ENCODE measurements at regions of chr19 and their contacts with region 1.

Region 1: GRCh38 chr19:56547535-56547934 is 8.8 kb downstream of the ZFP28 start:
- DNase-seq: no peak
- ATAC-seq: no peak
- H3K4me3 ChIP-seq: no peak overlapping the region
- H3K4me3 Mint-ChIP-seq: no peak overlapping the region
- H3K27ac ChIP-seq: no peak overlapping the region
- H3K27ac Mint-ChIP-seq: no peak overlapping the region
- H3K4me1 ChIP-seq: no peaks in the 10 kb centered on the region
- H3K4me1 Mint-ChIP-seq: no peaks in the 10 kb centered on the region
- H3K27me3 ChIP-seq: no peaks in the 10 kb centered on the region
- H3K27me3 Mint-ChIP-seq: no peaks in the 10 kb centered on the region
- CTCF ChIP-seq: no peak

Region 2: DNA sequence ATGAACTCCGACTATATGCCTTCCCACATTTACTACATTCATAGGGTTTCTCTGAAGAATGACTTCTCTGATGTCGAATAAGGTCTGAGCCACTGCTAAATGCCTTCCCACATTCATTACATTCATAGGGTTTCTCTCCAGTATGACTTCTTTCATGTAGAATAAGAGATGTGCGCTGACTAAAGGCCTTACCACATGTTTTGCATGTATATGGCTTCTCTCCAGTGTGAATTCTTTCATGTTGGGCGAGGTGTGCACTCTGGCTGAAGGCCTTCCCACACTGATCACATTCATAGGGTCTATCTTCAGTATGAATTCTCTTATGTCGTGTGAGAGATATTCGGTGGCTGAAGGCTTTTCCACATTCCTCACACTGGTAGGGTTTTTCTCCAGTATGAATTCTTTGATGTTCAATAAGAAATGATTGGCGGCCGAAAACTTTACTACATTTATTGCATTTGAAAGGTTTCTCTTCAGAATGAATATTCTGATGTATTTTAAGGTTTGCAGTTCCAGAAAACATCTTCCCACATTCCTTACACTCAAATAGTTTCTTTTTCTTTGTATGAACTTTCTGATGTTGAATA is 106.2 kb before region 1 on chr19:
- CTCF ChIA-PET with region 1: no interaction called
- POLR2A ChIA-PET with region 1: no interaction called
- intact Hi-C with region 1: no loop called
- DNase-seq: no peak
- ATAC-seq: no peak
- H3K4me3 ChIP-seq: peak overlapping the region in 1 of 5 experiments; percentile 15
- H3K4me3 Mint-ChIP-seq: no peak overlapping the region
- H3K27ac ChIP-seq: no peak overlapping the region
- H3K27ac Mint-ChIP-seq: no peak overlapping the region
- H3K4me1 ChIP-seq: no peaks in the 10 kb centered on the region
- H3K4me1 Mint-ChIP-seq: no peaks in the 10 kb centered on the region
- H3K27me3 ChIP-seq: no peaks in the 10 kb centered on the region
- H3K27me3 Mint-ChIP-seq: no peaks in the 10 kb centered on the region
- CTCF ChIP-seq: no peak

Region 3: DNA sequence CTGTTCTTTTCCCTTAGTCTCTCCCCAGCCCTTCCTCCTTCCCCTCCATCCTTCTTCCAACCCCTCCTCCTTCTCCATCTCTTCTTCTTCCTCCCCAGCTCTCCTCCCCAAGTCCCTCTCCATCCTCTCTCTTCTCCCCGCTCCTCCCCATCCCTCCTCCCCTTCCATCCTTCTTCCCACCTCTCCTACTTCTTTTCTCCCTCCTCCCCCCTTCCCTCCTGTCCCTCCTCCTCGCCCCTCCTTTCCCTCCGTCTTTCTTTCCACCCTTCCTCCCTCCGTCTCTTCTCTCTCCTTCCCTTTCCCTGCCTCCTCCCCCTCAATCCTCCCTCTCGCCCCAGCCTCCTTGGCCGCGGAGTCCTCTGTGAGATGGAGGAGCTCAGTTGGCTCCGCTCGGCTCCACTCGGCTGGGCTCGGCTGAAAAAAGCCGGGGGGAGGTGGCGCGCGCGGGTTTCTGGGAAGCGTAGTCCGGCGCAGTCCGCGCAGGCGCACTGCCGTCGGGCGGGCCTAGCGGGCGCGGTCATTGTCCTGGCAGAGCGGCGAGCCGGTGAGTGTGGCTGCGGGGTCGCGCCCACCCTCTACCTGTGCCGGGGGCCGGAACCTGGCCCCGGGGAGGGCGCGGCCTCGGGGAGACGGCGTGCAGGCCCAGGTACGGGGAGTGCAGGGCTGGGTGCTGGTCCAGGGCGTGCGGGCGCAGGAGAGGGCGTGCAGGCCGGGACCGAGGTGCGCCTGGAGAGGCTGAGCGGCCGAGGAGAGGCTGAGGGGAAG is 47.4 kb after region 1 on chr19 and contains the start of gene ZNF71:
- CTCF ChIA-PET with region 1: no interaction called
- POLR2A ChIA-PET with region 1: no interaction called
- intact Hi-C with region 1: loop called (anchors 10 kb)
- DNase-seq: peak; percentile 89
- ATAC-seq: peak; percentile 94
- H3K4me3 ChIP-seq: peak within 1 kb of the TSS; percentile 22 to 88 (median 68)
- H3K4me3 Mint-ChIP-seq: peak within 1 kb of the TSS; percentile 93
- H3K27ac ChIP-seq: peak within 1 kb of the TSS; percentile 49 to 88
- H3K27ac Mint-ChIP-seq: peak within 1 kb of the TSS; percentile 90
- H3K4me1 ChIP-seq: peaks cover 11 to 20% of the 10 kb centered on the region in 2 donors
- H3K4me1 Mint-ChIP-seq: peaks cover 19% of the 10 kb centered on the region
- H3K27me3 ChIP-seq: peaks cover 0 to 4% (median 0%) of the 10 kb centered on the region in 4 experiments
- H3K27me3 Mint-ChIP-seq: no peaks in the 10 kb centered on the region
- CTCF ChIP-seq: no peak
- total RNA-seq, gene ZNF71: 9.0 and 9.3 TPM in 2 replicates